ENCODE measurements at regions of chr12 and their contacts with region 1.

Region 1: GRCh38 chr12:32455607-32456071 is 56.3 kb downstream of the FGD4 start:
- DNase-seq: peak; percentile 66 to 81
- ATAC-seq: peak; percentile 73 to 74
- H3K4me3 ChIP-seq: peak overlapping the region; percentile 28; the same call in 2 of the 3 replicates
- H3K27ac ChIP-seq: peak overlapping the region; percentile 69 to 82; a peak in 4 of 6 replicates
- H3K4me1 ChIP-seq: peaks cover 60% of the 10 kb centered on the region
- CTCF ChIP-seq: peak; percentile 89
- EP300 ChIP-seq: no peak
- POLR2A ChIP-seq: no peak
- RAD21 ChIP-seq: peak; percentile 91 to 92

Region 2: GRCh38 chr12:32399337-32400113 is 56.1 kb before region 1 on chr12 and contains the start of gene FGD4:
- CTCF ChIA-PET with region 1: interaction called, 29 read pairs
- POLR2A ChIA-PET with region 1: no interaction called
- DNase-seq: peak; percentile 88 to 91
- ATAC-seq: peak; percentile 94 to 97
- H3K4me3 ChIP-seq: peak within 1 kb of the TSS; percentile 83
- H3K27ac ChIP-seq: peak within 1 kb of the TSS; percentile 85 to 88
- H3K4me1 ChIP-seq: peaks cover 15% of the 10 kb centered on the region; the same call in 2 of the 3 replicates
- CTCF ChIP-seq: peak; percentile 64
- EP300 ChIP-seq: no peak
- POLR2A ChIP-seq: peak; percentile 55
- RAD21 ChIP-seq: peak; percentile 49 to 67
- polyA plus RNA-seq, gene FGD4: 5.6 and 6.0 TPM in 2 replicates

Region 3: GRCh38 chr12:32437095-32437515 is 18.5 kb before region 1 on chr12:
- CTCF ChIA-PET with region 1: interaction called, 25 read pairs
- POLR2A ChIA-PET with region 1: interaction called, 5 read pairs
- DNase-seq: peak; percentile 81 to 92
- ATAC-seq: peak; percentile 90 to 97
- H3K4me3 ChIP-seq: no peak overlapping the region
- H3K27ac ChIP-seq: peak overlapping the region; percentile 73 to 82
- H3K4me1 ChIP-seq: peaks cover 31% of the 10 kb centered on the region
- CTCF ChIP-seq: no peak
- EP300 ChIP-seq: peak; percentile 65 to 67; a peak in 3 of 5 replicates
- POLR2A ChIP-seq: no peak
- RAD21 ChIP-seq: peak in 1 of 2 experiments; percentile 15; a peak in 2 of 5 replicates

Region 4: GRCh38 chr12:32494656-32495055 is 39.0 kb after region 1 on chr12:
- CTCF ChIA-PET with region 1: no interaction called
- POLR2A ChIA-PET with region 1: no interaction called
- DNase-seq: no peak
- ATAC-seq: no peak
- H3K4me3 ChIP-seq: no peak overlapping the region
- H3K27ac ChIP-seq: no peak overlapping the region
- H3K4me1 ChIP-seq: no peaks in the 10 kb centered on the region
- CTCF ChIP-seq: no peak
- EP300 ChIP-seq: no peak
- POLR2A ChIP-seq: no peak
- RAD21 ChIP-seq: no peak

Region 5: DNA sequence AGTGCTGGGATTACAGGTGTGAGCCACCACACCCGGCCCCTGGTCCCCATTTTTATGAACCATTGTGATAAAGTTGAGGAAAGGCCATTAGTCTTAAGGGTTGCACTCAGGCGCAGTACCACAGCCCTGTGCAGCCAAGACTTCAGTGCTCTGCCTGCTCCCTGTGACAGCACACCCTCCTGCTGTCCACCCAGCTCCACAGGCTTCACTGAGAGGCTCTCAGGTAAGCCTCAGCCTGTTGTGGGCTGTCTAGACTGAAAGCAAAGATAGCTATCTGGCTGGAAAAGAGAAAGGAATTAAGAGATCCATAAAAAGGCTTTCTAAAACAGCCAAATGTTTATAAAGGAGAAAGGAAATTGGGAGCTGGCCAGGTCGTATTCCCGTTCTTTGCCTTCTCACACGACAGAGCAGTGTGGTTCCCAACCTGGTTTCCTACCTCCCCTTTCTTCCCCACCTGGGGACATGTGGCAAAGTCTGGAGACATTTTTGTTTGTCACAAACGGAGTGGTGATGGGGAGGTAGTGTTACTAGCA is 204.3 kb after region 1 on chr12:
- CTCF ChIA-PET with region 1: interaction called, 35 read pairs
- POLR2A ChIA-PET with region 1: interaction called, 4 read pairs
- DNase-seq: no peak
- ATAC-seq: peak in 1 of 2 experiments; percentile 23; a peak in 1 of 6 replicates
- H3K4me3 ChIP-seq: no peak overlapping the region
- H3K27ac ChIP-seq: no peak overlapping the region
- H3K4me1 ChIP-seq: peaks cover 3% of the 10 kb centered on the region; the same call in 2 of the 3 replicates
- CTCF ChIP-seq: no peak
- EP300 ChIP-seq: no peak
- POLR2A ChIP-seq: no peak
- RAD21 ChIP-seq: no peak

Measured in A549 (cell line).